Activated T-helper 2 cell treated with anti-CD3 and anti-CD28 coated beads, Interferon-gamma antibody, Interleukin-2, Interleukin-4, amounts not matched to agents 10 μg/mL and 5 μg/mL and 100 μg/mL, durations not matched to agents 14 hours and 24 hours and 36 hours (primary cell): ENCODE measurements at regions of chr11 and their contacts with region 1.

Region 1: GRCh38 chr11:132186699-132187098 is 816.3 kb downstream of the NTM start:
- DNase-seq: no peak
- H3K4me3 Mint-ChIP-seq: no peak overlapping the region
- H3K27ac Mint-ChIP-seq: no peak overlapping the region
- H3K4me1 Mint-ChIP-seq: no peaks in the 10 kb centered on the region
- H3K27me3 Mint-ChIP-seq: no peaks in the 10 kb centered on the region

Region 2: DNA sequence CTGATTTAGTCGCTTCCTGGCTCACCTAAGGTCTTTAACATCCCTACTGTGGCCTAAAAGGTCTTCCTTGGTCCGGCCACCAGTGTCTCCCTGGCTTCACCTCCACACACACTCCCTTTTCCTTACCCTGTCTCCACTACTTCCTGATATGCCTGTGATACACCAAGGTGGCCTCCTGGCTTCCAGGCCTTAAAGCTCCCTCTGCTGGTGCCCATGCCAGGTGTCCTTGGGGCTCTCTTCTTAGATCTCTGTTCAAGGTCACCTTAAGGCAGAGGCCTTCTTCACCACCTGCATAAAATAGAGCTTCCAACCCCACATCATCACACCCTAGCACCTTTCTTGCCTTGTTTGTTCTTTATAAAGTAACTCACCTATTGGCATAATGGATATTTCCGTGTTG is 28.6 kb before region 1 on chr11:
- intact Hi-C with region 1: no loop called
- DNase-seq: no peak
- H3K4me3 Mint-ChIP-seq: no peak overlapping the region
- H3K27ac Mint-ChIP-seq: no peak overlapping the region
- H3K4me1 Mint-ChIP-seq: no peaks in the 10 kb centered on the region
- H3K27me3 Mint-ChIP-seq: no peaks in the 10 kb centered on the region

Region 3: DNA sequence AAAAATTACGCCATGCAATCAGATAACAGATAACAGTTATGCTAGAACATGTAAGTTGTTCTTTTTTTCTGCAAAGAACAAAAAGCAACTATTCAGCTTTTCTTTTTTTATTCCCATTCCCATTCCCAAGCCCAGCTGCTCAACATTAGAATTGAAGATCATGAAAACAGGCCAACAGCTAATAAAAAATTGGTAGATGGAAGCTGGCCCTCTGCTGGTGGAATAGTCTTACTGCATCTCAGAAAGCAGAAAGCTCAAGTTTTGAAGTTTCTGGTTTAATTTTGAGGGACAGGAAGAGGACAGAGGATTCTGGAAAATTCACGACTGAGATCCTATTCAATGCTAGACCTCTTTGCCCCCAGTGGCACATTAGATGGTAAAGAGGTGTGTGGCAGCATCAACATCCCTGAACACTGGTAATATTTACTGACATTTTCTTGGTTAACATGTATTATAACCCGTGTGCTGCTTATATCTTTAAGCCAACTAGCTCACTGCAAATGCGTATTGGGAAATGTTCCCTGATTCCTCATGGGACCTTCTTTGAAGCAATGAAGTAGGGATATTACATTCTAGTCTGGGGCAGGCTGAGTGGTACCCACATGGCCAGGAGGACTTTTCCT is 754.4 kb after region 1 on chr11:
- intact Hi-C with region 1: loop called (anchors 10 kb)
- DNase-seq: no peak
- H3K4me3 Mint-ChIP-seq: no peak overlapping the region
- H3K27ac Mint-ChIP-seq: no peak overlapping the region
- H3K4me1 Mint-ChIP-seq: no peaks in the 10 kb centered on the region
- H3K27me3 Mint-ChIP-seq: peaks cover 34% of the 10 kb centered on the region